Thyroid gland (tissue), 4 donors: ENCODE measurements at regions of chr11 and their contacts with region 1.

Region 1: GRCh38 chr11:108121274-108122155 is at the start of gene ACAT1:
- DNase-seq: peak; percentile 98 to 99
- H3K4me3 ChIP-seq: peak within 1 kb of the TSS; percentile 48 to 54 (median 53)
- H3K27ac ChIP-seq: peak within 1 kb of the TSS; percentile 85 to 96 (median 91)
- H3K4me1 ChIP-seq: peaks cover 21 to 33% of the 10 kb centered on the region in 2 donors
- H3K27me3 ChIP-seq: no peaks in the 10 kb centered on the region
- CTCF ChIP-seq: peak in 4 of 6 experiments; percentile 17 to 49 (median 24)
- POLR2A ChIP-seq: peak; percentile 33 to 94
- total RNA-seq, gene ACAT1: 69.9 to 399 (median 144) TPM

Region 2: DNA sequence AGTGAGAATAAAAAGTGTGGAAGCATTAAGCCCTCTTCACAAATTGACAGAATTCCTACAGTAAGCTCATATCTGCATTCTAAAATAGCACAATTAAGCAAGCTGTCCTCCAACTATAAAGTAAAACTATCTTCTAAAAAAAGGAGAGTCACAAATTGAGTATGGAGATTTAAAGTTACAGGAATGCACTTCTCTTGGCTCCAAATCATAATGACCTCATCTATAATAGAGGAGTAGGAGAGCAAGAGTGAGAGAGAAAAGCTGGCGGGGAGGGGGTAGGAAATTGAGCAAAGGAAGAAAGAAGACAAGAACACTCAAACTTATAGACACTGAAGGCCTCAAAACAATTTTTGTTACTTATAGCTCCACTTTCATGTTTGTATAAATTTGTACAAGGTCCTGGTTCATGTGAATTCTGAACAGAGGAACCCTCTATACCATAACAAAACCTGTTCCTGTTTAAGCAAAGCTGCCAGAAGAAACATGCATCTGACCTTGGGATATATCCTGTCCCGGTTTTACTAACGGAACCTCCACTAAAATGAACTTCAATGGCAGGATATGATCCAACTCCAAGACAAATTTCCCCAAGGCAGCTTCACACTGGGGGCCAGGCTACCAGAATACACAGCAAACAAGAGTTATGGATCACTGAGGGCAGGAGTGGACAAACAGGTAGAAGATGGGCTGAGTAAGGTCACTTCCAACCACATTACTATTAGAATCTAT is 300.2 kb before region 1 on chr11:
- intact Hi-C with region 1: no loop called
- DNase-seq: no peak
- H3K4me3 ChIP-seq: no peak overlapping the region
- H3K27ac ChIP-seq: no peak overlapping the region
- H3K4me1 ChIP-seq: peaks cover 0 to 5% of the 10 kb centered on the region in 2 donors
- H3K27me3 ChIP-seq: no peaks in the 10 kb centered on the region
- CTCF ChIP-seq: no peak
- POLR2A ChIP-seq: no peak

Region 3: GRCh38 chr11:108177570-108177969 is 56.1 kb after region 1 on chr11:
- intact Hi-C with region 1: no loop called
- DNase-seq: no peak
- H3K4me3 ChIP-seq: no peak overlapping the region
- H3K27ac ChIP-seq: no peak overlapping the region
- H3K4me1 ChIP-seq: no peaks in the 10 kb centered on the region
- H3K27me3 ChIP-seq: no peaks in the 10 kb centered on the region
- CTCF ChIP-seq: no peak
- POLR2A ChIP-seq: no peak

Region 4: DNA sequence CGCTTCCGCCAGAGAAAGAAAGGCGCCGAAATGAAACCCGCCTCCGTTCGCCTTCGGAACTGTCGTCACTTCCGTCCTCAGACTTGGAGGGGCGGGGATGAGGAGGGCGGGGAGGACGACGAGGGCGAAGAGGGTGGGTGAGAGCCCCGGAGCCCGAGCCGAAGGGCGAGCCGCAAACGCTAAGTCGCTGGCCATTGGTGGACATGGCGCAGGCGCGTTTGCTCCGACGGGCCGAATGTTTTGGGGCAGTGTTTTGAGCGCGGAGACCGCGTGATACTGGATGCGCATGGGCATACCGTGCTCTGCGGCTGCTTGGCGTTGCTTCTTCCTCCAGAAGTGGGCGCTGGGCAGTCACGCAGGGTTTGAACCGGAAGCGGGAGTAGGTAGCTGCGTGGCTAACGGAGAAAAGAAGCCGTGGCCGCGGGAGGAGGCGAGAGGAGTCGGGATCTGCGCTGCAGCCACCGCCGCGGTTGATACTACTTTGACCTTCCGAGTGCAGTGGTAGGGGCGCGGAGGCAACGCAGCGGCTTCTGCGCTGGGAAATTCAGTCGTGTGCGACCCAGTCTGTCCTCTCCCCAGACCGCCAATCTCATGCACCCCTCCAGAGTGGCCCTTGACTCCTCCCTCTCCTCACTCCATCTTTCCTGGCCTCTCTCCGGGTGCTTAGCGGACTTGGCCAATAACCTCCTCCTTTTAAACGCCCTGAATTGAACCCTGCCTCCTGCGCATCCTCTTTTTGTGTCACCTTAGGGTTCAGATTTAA is 101.4 kb after region 1 on chr11 and contains the start of gene ATM:
- intact Hi-C with region 1: loop called (anchors 10 kb)
- DNase-seq: peak; percentile 100
- H3K4me3 ChIP-seq: peak within 1 kb of the TSS; percentile 32 to 86 (median 69)
- H3K27ac ChIP-seq: peak within 1 kb of the TSS; percentile 87 to 94 (median 93)
- H3K4me1 ChIP-seq: peaks cover 31 to 35% of the 10 kb centered on the region in 2 donors
- H3K27me3 ChIP-seq: no peaks in the 10 kb centered on the region
- CTCF ChIP-seq: peak in 5 of 6 experiments; percentile 32 to 78 (median 63)
- POLR2A ChIP-seq: no peak
- total RNA-seq, gene ATM: 84.4 to 207 (median 137) TPM